Activated naive CD4-positive, alpha-beta T cell treated with anti-CD3 and anti-CD28 coated beads, Interleukin-2, amount 10 ng/mL, durations not matched to agents 7 days and 5 days (primary cell): ENCODE measurements at regions of chr11 and their contacts with region 1.

Region 1: DNA sequence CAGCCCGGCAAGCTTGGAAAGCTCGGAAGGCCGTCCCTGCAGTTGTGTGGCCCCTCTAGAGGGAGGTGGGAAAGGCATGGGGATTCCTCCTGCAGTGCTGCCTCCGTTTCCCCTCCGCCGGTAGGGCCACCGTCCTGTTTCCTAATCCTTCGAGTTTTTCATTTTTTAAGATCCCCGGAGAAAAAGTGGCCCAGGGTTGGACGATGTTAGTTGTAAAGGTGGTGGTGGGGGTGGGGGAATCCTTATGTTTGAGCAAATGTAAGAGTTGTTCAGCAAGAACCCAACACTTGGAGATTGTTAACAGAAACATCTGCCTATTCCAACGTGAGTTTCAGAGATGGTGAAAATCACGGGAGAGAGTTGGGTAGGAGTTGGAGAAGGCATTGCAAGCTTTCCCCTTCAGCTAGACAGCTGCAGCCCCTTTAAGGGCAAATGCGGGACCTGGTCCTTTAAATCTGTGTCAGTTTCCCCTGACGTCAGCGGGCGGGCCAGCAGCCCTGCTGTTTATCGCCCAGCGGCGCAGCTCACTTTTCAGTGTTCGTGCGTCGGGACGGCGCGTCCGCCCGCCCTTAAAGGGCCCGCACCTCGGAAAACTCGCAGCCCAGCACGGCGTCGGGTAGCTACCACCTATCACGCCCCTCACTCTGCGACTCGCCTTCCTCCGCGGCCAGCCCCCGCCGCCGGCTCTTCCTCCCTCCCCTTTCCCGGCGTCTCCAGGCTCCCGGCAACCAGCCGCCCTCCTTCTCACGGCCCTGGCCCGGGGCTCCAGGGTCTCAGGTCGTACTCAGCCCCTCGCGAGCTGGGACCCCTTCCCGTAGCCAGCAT is at the start of gene SIDT2:
- DNase-seq: peak; percentile 95
- H3K4me3 Mint-ChIP-seq: peak within 1 kb of the TSS; percentile 93
- H3K27ac Mint-ChIP-seq: peak within 1 kb of the TSS; percentile 90
- H3K4me1 Mint-ChIP-seq: peaks cover 32% of the 10 kb centered on the region
- H3K27me3 Mint-ChIP-seq: no peaks in the 10 kb centered on the region

Region 2: GRCh38 chr11:116472651-116473050 is 705.8 kb before region 1 on chr11:
- CTCF ChIA-PET with region 1: no interaction called
- DNase-seq: no peak
- H3K4me3 Mint-ChIP-seq: no peak overlapping the region
- H3K27ac Mint-ChIP-seq: no peak overlapping the region
- H3K4me1 Mint-ChIP-seq: no peaks in the 10 kb centered on the region
- H3K27me3 Mint-ChIP-seq: peaks cover 9% of the 10 kb centered on the region

Region 3: GRCh38 chr11:117189931-117190544 is 11.6 kb after region 1 on chr11:
- CTCF ChIA-PET with region 1: interaction called, 14 read pairs
- DNase-seq: no peak
- H3K4me3 Mint-ChIP-seq: no peak overlapping the region
- H3K27ac Mint-ChIP-seq: no peak overlapping the region
- H3K4me1 Mint-ChIP-seq: peaks cover 9% of the 10 kb centered on the region
- H3K27me3 Mint-ChIP-seq: no peaks in the 10 kb centered on the region

Region 4: GRCh38 chr11:117226388-117227385 is 48.3 kb after region 1 on chr11:
- CTCF ChIA-PET with region 1: interaction called, 111 read pairs
- DNase-seq: peak; percentile 60
- H3K4me3 Mint-ChIP-seq: no peak overlapping the region
- H3K27ac Mint-ChIP-seq: peak overlapping the region; percentile 77
- H3K4me1 Mint-ChIP-seq: peaks cover 41% of the 10 kb centered on the region
- H3K27me3 Mint-ChIP-seq: no peaks in the 10 kb centered on the region

Region 5: GRCh38 chr11:117303085-117303484 is 124.7 kb after region 1 on chr11:
- CTCF ChIA-PET with region 1: no interaction called
- DNase-seq: no peak
- H3K4me3 Mint-ChIP-seq: no peak overlapping the region
- H3K27ac Mint-ChIP-seq: no peak overlapping the region
- H3K4me1 Mint-ChIP-seq: peaks cover 1% of the 10 kb centered on the region
- H3K27me3 Mint-ChIP-seq: peaks cover 19% of the 10 kb centered on the region

Region 6: GRCh38 chr11:117327567-117328374 is 149.3 kb after region 1 on chr11 and contains the start of gene CEP164:
- CTCF ChIA-PET with region 1: no interaction called
- DNase-seq: peak; percentile 98
- H3K4me3 Mint-ChIP-seq: peak within 1 kb of the TSS; percentile 25
- H3K27ac Mint-ChIP-seq: no peak within 1 kb of the TSS
- H3K4me1 Mint-ChIP-seq: peaks cover 11% of the 10 kb centered on the region
- H3K27me3 Mint-ChIP-seq: peaks cover 5% of the 10 kb centered on the region